ENCODE measurements at regions of chr22 and their contacts with region 1.

Region 1: GRCh38 chr22:29216873-29217666 is 11.4 kb downstream of the EMID1 start:
- DNase-seq: no peak
- ATAC-seq: peak in 1 of 8 donors; percentile 43
- H3K4me3 ChIP-seq: no peak overlapping the region
- H3K27ac ChIP-seq: no peak overlapping the region
- H3K4me1 ChIP-seq: peaks cover 0 to 7% (median 0%) of the 10 kb centered on the region in 9 donors
- H3K27me3 ChIP-seq: no peaks in the 10 kb centered on the region
- CTCF ChIP-seq: no peak

Region 2: DNA sequence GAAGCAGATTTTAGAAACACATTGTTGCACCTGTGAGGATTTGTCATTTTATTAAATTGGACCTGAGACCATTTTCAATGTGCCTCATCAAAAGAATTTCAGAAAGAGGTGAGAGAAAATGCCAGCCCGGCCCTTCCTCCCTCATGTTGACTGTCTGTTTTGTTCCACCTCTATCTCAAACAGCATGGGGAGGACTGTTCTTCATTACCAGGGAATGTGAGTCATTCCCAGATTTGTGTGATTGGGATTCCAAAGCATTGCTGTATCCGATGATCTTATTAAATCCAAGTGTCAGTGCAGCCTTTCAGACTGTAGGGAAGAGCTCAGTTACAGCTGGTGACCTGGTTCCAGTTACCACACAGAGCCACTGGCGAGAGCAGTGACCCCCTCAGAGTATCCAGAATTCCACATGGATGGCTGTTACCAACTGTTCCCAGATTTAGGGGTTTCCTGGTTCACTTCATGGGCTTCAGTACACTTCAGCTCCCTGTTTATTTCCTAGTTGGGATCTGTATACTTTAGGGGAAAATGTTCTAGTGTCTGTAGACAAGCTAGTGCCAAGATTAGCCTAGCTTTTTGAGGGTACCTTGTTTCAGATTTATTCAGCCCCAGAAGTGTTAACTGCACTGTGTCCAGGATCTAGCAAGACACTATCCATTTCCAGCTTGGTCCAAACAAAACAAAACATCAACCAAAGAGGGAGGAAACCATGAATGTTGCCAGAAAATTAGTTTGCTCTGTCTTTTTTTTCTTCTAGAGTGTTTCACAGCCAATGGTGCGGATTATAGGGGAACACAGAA is 123.4 kb before region 1 on chr22:
- intact Hi-C with region 1: no loop called
- DNase-seq: peak in 1 of 2 donors; percentile 29
- ATAC-seq: peak; percentile 64 to 88 (median 78)
- H3K4me3 ChIP-seq: no peak overlapping the region
- H3K27ac ChIP-seq: peak overlapping the region in 8 of 10 donors; percentile 21 to 69 (median 34)
- H3K4me1 ChIP-seq: peaks cover 0 to 57% (median 24%) of the 10 kb centered on the region in 9 donors
- H3K27me3 ChIP-seq: no peaks in the 10 kb centered on the region
- CTCF ChIP-seq: no peak

Region 3: DNA sequence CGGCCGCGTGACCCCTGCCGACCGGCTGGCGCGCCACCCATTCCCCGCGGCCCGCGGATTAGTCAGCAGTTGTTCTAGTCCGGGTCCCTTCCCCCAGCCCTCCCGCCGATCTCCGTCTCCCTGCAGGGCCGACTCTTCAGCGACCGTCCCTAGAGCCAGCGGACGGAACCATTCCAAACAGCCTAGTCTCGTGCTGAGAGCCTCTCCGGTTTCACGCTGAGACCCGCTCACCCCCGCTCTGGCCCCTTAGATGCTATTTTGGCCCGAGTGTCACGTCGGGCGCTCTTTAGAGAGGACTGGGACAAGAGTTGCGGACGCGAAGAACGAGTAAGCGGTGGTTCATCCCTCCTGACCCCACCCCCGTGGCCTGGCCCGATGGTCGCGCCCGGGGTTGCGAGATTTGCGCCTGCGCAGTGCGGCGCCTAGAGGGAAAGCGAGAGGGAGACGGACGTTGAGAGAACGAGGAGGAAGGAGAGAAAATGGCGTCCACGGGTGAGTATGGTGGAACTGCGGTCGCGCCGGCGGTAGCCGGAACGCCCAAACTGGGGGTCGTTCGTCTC is 50.9 kb after region 1 on chr22 and contains the starts of genes EWSR1 and RHBDD3:
- intact Hi-C with region 1: loop called in 1 of 10 experiments (anchors 10 kb)
- DNase-seq: peak; percentile 96 to 97
- ATAC-seq: peak; percentile 92 to 97 (median 95)
- H3K4me3 ChIP-seq: peak within 1 kb of the TSS; percentile 71 to 98 (median 82)
- H3K27ac ChIP-seq: peak within 1 kb of the TSS; percentile 98 to 100 (median 99)
- H3K4me1 ChIP-seq: peaks cover 13 to 59% (median 55%) of the 10 kb centered on the region in 9 donors
- H3K27me3 ChIP-seq: no peaks in the 10 kb centered on the region
- CTCF ChIP-seq: peak in 1 of 9 donors; percentile 10
- total RNA-seq, gene EWSR1: 131 to 153 (median 139) TPM
- total RNA-seq, gene RHBDD3: 7.0 to 18.0 (median 12.2) TPM

Region 4: DNA sequence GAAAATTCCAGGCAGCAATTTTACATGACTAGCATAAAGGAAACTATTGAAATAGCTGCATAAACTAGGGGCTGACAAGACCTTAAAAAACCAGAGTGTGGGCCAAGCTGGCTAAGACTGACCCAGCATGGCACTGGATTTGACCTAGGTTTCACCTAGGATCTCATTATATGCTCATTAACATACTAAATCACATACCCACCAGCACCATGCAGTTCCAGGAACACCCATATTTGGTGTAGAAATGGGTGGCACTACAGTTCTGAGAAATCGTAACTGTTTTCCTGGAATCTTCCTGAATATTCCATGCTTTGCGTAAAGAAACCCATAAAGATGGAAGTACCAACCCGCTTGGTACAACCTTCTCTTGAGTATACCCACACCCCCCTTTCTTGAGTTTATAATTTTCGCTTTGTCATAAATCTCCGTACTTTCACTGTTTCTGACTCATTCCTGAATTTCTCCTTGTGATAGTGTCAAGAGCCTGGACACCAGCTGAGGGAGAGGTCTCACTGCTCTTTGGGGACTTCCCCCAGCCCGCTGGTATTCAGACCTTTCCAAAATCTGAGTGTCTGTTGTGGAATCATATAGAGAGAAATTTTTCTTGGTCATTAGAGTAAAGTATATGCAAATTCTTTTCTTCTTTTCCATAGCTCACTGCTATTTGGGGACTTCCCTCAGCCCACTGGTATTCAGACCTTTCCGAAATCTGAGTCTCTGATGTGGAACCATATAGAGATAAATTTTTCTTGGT is 721.0 kb after region 1 on chr22:
- intact Hi-C with region 1: no loop called
- DNase-seq: no peak
- ATAC-seq: no peak
- H3K4me3 ChIP-seq: no peak overlapping the region
- H3K27ac ChIP-seq: no peak overlapping the region
- H3K4me1 ChIP-seq: peaks cover 0 to 44% (median 30%) of the 10 kb centered on the region in 9 donors
- H3K27me3 ChIP-seq: no peaks in the 10 kb centered on the region
- CTCF ChIP-seq: no peak

Measured in heart right ventricle (tissue), 16 donors.